Right ventricle myocardium inferior (tissue), 1 donor: ENCODE measurements at regions of chr9 and their contacts with region 1.

Region 1: GRCh38 chr9:77648234-77649120 is at the start of gene GNA14:
- DNase-seq: peak; percentile 77
- ATAC-seq: peak; percentile 80
- total RNA-seq, gene GNA14: 2.6 TPM

Region 2: GRCh38 chr9:77514886-77515711 is 133.4 kb before region 1 on chr9:
- intact Hi-C with region 1: loop called (anchors 5 kb)
- DNase-seq: no peak
- ATAC-seq: peak; percentile 44